H1 (cell line): ENCODE measurements at regions of chr11 and their contacts with region 1.

Region 1: DNA sequence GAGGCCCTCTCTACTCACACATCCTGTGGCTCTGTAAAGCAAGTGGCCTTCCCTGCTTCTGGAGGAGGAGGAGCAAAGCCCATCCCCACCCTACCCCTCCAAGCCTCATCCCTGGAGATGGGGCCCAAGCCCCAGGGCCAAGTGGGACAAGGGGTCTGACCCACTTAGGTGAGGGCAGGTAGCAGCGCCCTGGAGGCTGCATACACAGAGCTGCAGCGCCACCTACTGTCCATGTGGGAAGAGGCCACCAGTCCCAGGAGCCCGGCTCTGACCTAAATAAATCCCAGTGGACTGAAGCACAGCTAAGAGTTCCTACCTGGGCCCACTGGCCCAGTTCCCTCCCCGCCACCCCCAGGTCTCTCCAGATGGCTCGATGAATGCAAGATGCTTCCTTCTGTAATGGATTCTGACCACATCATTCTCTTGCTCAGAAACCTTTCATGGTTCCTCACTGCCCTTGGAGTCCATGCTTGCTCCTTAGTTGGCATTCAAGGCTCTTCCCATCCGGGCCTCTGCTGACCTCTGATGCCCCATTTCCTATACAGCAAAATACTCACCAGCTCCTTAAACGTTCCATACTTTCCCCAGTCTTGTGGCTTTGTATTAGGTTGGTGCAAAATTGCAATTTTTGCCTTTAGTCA is 62.1 kb downstream of the THAP12 start:
- DNase-seq: peak; percentile 68 to 94
- H3K4me3 ChIP-seq: no peak overlapping the region
- H3K27ac ChIP-seq: no peak overlapping the region
- H3K4me1 ChIP-seq: peaks cover under 1 to 11% (median 6%) of the 10 kb centered on the region in 4 experiments
- H3K27me3 ChIP-seq: peaks cover 8 to 32% (median 29%) of the 10 kb centered on the region in 4 experiments
- CTCF ChIP-seq: peak; percentile 90 to 96 (median 94)
- EP300 ChIP-seq: no peak
- POLR2A ChIP-seq: no peak
- RAD21 ChIP-seq: peak; percentile 99

Region 2: GRCh38 chr11:75896843-75897419 is 421.9 kb before region 1 on chr11:
- CTCF ChIA-PET with region 1: interaction called, 12 read pairs
- POLR2A ChIA-PET with region 1: no interaction called
- DNase-seq: no peak
- H3K4me3 ChIP-seq: no peak overlapping the region
- H3K27ac ChIP-seq: no peak overlapping the region
- H3K4me1 ChIP-seq: no peaks in the 10 kb centered on the region
- H3K27me3 ChIP-seq: no peaks in the 10 kb centered on the region
- CTCF ChIP-seq: peak in 2 of 3 experiments; percentile 42; a peak in 2 of 4 replicates
- EP300 ChIP-seq: no peak
- POLR2A ChIP-seq: no peak
- RAD21 ChIP-seq: peak; percentile 66 to 77

Region 3: GRCh38 chr11:76215941-76216340 is 102.9 kb before region 1 on chr11:
- CTCF ChIA-PET with region 1: interaction called, 252 read pairs
- POLR2A ChIA-PET with region 1: no interaction called
- DNase-seq: no peak
- H3K4me3 ChIP-seq: no peak overlapping the region
- H3K27ac ChIP-seq: no peak overlapping the region
- H3K4me1 ChIP-seq: peaks cover 3 to 22% (median 6%) of the 10 kb centered on the region in 4 experiments
- H3K27me3 ChIP-seq: peaks cover 12 to 26% (median 19%) of the 10 kb centered on the region in 4 experiments
- CTCF ChIP-seq: no peak
- EP300 ChIP-seq: no peak
- POLR2A ChIP-seq: no peak
- RAD21 ChIP-seq: no peak

Region 4: GRCh38 chr11:76248210-76248609 is 70.7 kb before region 1 on chr11:
- CTCF ChIA-PET with region 1: interaction called, 47 read pairs
- POLR2A ChIA-PET with region 1: interaction called, 4 read pairs
- DNase-seq: peak in 1 of 2 experiments; percentile 59
- H3K4me3 ChIP-seq: no peak overlapping the region
- H3K27ac ChIP-seq: no peak overlapping the region
- H3K4me1 ChIP-seq: peaks cover 0 to 9% (median 7%) of the 10 kb centered on the region in 4 experiments; a peak in 6 of 7 replicates
- H3K27me3 ChIP-seq: peaks cover 2 to 8% (median 6%) of the 10 kb centered on the region in 4 experiments; a peak in 6 of 7 replicates
- CTCF ChIP-seq: peak; percentile 54 to 74 (median 72)
- EP300 ChIP-seq: no peak
- POLR2A ChIP-seq: no peak
- RAD21 ChIP-seq: peak; percentile 35 to 57; a peak in 3 of 4 replicates

Region 5: DNA sequence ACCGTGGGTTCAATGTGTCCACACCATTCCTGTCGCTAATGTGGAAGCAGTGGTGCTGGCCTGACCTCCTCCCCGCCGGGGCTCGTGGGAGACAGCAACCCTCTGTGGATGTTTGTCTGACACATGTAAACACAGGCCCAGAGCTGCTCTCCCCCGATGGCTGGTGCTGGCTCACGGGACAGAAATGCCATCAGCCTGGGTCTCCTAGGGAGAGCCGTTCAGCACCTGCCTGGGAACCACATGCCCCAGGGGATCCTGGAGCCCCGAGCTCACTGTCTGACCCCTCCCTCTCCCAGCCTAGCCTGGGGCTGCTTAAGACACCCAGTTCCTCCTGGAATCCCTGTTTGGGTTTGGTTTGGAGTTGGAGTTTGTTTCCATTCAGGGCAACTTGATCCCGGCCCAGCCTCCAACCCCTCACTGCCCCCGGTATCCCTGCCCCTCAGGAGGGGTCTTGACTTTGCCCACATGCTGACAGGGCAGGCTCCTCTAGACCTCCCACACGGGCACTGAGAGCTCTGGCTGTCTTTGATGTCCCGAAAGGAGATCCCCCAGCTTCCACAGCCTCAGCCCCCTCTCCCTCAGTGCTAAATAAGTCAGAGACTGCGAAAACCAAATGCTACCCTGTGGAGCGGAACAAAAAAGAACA is 61.7 kb before region 1 on chr11:
- CTCF ChIA-PET with region 1: interaction called, 47 read pairs
- POLR2A ChIA-PET with region 1: no interaction called
- DNase-seq: no peak
- H3K4me3 ChIP-seq: no peak overlapping the region
- H3K27ac ChIP-seq: no peak overlapping the region
- H3K4me1 ChIP-seq: peaks cover 0 to 8% (median 3%) of the 10 kb centered on the region in 4 experiments; a peak in 5 of 7 replicates
- H3K27me3 ChIP-seq: no peaks in the 10 kb centered on the region
- CTCF ChIP-seq: no peak
- EP300 ChIP-seq: no peak
- POLR2A ChIP-seq: no peak
- RAD21 ChIP-seq: no peak

Region 6: GRCh38 chr11:76307396-76307795 is 11.5 kb before region 1 on chr11:
- CTCF ChIA-PET with region 1: interaction called, 55 read pairs
- POLR2A ChIA-PET with region 1: no interaction called
- DNase-seq: no peak
- H3K4me3 ChIP-seq: no peak overlapping the region
- H3K27ac ChIP-seq: no peak overlapping the region
- H3K4me1 ChIP-seq: peaks cover 0 to 8% (median 2%) of the 10 kb centered on the region in 4 experiments; a peak in 6 of 7 replicates
- H3K27me3 ChIP-seq: no peaks in the 10 kb centered on the region
- CTCF ChIP-seq: no peak
- EP300 ChIP-seq: no peak
- POLR2A ChIP-seq: no peak
- RAD21 ChIP-seq: no peak

Region 7: GRCh38 chr11:76329084-76329984 is 10.5 kb after region 1 on chr11:
- CTCF ChIA-PET with region 1: interaction called, 18 read pairs
- POLR2A ChIA-PET with region 1: no interaction called
- DNase-seq: peak in 1 of 2 experiments; percentile 45
- H3K4me3 ChIP-seq: no peak overlapping the region
- H3K27ac ChIP-seq: no peak overlapping the region
- H3K4me1 ChIP-seq: peaks cover 0 to 11% (median 3%) of the 10 kb centered on the region in 4 experiments; a peak in 4 of 7 replicates
- H3K27me3 ChIP-seq: 0 out of 7 replicates have a peak, but pooled peaks cover 0 to 3% (median 0%) of the 10 kb centered on the region in 4 experiments
- CTCF ChIP-seq: no peak
- EP300 ChIP-seq: no peak
- POLR2A ChIP-seq: no peak
- RAD21 ChIP-seq: no peak

Region 8: DNA sequence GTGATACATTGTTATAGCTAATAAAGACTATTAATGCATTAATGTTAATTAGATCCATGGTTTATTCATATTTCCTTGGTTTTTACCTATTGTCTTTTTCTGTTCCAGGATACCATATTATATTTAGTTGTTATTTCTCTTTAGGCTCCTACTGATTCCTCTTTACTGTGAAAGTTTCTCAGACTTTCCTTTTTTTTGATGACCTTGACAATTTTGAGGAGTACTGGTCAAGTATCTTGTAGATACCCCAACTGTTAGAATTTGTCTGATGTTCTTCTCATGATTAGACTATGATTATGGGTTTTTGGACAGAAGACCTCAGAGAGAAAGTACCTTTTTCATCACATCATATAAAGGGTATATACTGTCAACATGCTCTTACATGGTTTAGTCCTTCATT is 152.5 kb after region 1 on chr11:
- CTCF ChIA-PET with region 1: no interaction called
- POLR2A ChIA-PET with region 1: no interaction called
- DNase-seq: no peak
- H3K4me3 ChIP-seq: no peak overlapping the region
- H3K27ac ChIP-seq: no peak overlapping the region
- H3K4me1 ChIP-seq: no peaks in the 10 kb centered on the region
- H3K27me3 ChIP-seq: no peaks in the 10 kb centered on the region
- CTCF ChIP-seq: no peak
- EP300 ChIP-seq: no peak
- POLR2A ChIP-seq: no peak
- RAD21 ChIP-seq: no peak